CD8-positive, alpha-beta T cell (primary cell): ENCODE measurements at regions of chr10 and their contacts with region 1.

Region 1: DNA sequence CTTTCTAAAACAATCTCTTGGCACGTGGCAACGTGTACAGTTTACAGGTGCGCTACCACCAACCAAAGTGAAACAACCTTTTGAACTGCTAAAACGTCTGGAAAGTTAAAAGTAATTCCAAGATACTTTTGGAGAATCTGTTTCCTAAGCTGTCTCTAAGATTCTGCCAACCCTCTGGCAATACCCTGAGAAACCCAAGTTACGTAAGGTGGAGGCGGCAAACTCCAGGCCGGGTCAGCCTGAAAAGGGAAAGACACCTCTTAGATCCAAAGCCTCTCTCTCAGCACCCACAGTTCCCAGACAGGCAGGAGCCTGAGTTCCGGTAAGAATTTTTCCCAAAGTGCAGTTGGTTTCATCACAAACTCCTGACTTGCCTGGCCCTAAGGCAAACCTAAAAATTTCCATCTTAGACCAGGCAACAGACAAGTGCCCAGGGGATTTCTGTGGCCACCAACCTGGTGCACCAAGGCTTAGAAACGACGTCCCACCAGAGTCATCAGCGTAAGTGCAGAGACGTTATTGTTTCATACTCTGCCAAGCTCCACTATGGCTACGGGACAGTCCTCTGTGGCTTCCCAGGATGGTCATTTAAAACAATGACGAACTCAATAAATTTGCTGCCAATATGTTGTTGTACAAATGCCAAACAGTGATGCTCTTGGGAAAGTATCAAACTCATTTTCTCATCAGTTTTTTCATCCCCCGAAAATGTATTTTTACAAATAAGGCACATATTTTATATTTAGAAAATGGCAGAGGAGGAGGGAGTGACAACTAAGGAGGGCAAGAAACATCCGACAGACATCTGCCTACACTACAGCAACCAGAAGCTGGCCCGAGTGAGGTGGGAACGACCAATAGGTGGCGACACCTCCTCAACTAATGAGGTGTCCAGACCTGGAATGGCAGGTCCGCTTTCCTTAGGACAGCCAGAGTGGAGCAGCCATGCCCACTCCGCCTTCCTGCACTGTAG is 205.8 kb upstream of the FRMD4A start:
- DNase-seq: peak in 7 of 9 experiments; percentile 28 to 69 (median 52)
- ATAC-seq: peak; percentile 39
- H3K4me3 ChIP-seq: no peak overlapping the region
- H3K4me3 Mint-ChIP-seq: no peak overlapping the region
- H3K27ac ChIP-seq: peak overlapping the region in 1 of 2 experiments; percentile 27
- H3K27ac Mint-ChIP-seq: peak overlapping the region; percentile 57
- H3K4me1 ChIP-seq: peaks cover 47% of the 10 kb centered on the region
- H3K4me1 Mint-ChIP-seq: peaks cover 96% of the 10 kb centered on the region
- H3K27me3 ChIP-seq: no peaks in the 10 kb centered on the region
- H3K27me3 Mint-ChIP-seq: no peaks in the 10 kb centered on the region
- CTCF ChIP-seq: peak; percentile 39

Region 2: DNA sequence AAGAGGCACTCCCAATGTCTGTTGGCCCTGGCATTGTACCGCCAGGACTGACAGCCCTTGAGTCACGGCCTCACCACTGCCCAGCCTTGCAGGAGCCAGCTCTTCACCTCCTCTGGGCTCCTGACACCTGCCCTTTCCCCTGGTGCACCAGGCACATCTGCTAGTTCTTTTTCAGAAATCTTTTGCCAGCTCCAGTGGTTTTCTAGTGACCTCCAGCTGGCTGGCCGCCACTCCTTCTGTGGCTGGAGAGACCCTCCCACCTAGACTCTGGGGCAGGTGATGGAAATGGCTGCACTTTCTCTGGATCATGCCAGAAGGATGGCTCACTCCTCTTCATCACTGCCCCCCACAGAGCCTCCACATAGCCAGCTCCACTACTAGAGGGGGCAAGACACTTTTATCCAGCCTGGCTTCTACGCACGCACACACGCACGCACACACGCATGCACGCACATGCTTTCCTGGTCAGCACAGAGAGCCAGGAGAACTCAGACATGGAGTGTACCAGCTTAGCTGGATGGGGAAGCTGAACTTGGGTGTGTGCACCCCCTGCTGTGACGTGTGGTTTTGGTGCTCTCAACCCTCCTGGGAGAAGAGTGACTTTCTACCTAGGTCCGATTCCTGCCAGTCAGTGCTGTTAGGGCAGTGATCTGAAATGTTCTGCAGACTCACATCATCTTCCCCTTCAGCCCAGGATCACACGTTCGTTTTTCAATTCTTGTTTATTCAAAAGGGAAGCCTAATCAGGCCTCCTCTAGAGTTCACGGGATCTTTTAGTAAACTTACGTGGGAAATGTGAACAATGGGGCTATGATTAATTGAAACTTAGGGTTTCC is 727.8 kb before region 1 on chr10:
- CTCF ChIA-PET with region 1: no interaction called
- POLR2A ChIA-PET with region 1: no interaction called
- intact Hi-C with region 1: loop called in 1 of 2 experiments (anchors 10 kb)
- DNase-seq: no peak
- ATAC-seq: no peak
- H3K4me3 ChIP-seq: no peak overlapping the region
- H3K4me3 Mint-ChIP-seq: no peak overlapping the region
- H3K27ac ChIP-seq: no peak overlapping the region
- H3K27ac Mint-ChIP-seq: no peak overlapping the region
- H3K4me1 ChIP-seq: peaks cover 9% of the 10 kb centered on the region
- H3K4me1 Mint-ChIP-seq: peaks cover 7% of the 10 kb centered on the region
- H3K27me3 ChIP-seq: peaks cover 0 to 4% of the 10 kb centered on the region in 2 experiments
- H3K27me3 Mint-ChIP-seq: no peaks in the 10 kb centered on the region
- CTCF ChIP-seq: no peak

Region 3: GRCh38 chr10:14673189-14673861 is 136.8 kb after region 1 on chr10:
- CTCF ChIA-PET with region 1: no interaction called
- POLR2A ChIA-PET with region 1: no interaction called
- intact Hi-C with region 1: no loop called
- DNase-seq: no peak
- ATAC-seq: no peak
- H3K4me3 ChIP-seq: no peak overlapping the region
- H3K4me3 Mint-ChIP-seq: no peak overlapping the region
- H3K27ac ChIP-seq: no peak overlapping the region
- H3K27ac Mint-ChIP-seq: no peak overlapping the region
- H3K4me1 ChIP-seq: no peaks in the 10 kb centered on the region
- H3K4me1 Mint-ChIP-seq: no peaks in the 10 kb centered on the region
- H3K27me3 ChIP-seq: no peaks in the 10 kb centered on the region
- H3K27me3 Mint-ChIP-seq: no peaks in the 10 kb centered on the region
- CTCF ChIP-seq: no peak